CD14-positive monocyte (primary cell): ENCODE measurements at regions of chr2 and their contacts with region 1.

Region 1: DNA sequence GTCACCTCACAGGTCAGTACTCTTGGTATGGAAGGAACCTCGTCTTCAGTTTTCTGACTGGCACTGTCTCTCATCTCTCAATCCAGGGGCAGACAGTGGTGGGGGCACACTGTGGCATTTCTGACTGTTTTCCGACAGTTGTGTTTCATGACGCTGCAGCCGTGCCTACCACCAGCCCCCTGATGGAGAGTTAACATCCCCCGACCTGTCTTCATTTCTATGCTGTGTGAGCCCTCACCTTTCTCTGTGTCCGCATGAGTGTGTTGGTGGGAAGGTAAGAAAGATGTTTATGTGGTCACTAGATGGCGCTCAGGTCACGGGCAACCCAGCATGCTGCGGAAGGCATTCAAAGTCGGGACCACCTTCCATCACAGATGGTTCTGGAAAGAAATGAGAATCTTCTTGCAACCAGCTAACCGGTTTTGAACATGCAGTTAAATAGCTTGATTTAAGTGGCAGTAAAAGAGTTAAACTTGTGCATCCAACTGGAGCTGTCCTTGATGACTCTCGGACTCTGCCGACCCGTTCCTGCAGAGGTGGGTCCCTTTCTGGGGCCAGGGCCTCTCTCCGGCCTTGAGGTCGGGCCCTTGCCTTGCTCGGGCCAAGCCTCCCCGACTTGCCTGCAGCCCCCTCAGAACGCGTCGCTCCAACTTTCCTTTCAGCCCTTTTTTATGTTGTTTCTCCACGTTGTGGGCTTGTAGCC is 92.4 kb downstream of the DYSF start:
- DNase-seq: peak in 1 of 3 donors; percentile 12
- H3K4me3 ChIP-seq: no peak overlapping the region
- H3K4me3 Mint-ChIP-seq: peak overlapping the region; percentile 51 to 80
- H3K27ac ChIP-seq: peak overlapping the region in 1 of 2 donors; percentile 33
- H3K27ac Mint-ChIP-seq: peak overlapping the region in 5 of 7 donors; percentile 9 to 80 (median 36)
- H3K4me1 ChIP-seq: peaks cover 15 to 17% of the 10 kb centered on the region in 2 donors
- H3K4me1 Mint-ChIP-seq: peaks cover 18% of the 10 kb centered on the region
- H3K27me3 ChIP-seq: no peaks in the 10 kb centered on the region
- H3K27me3 Mint-ChIP-seq: peaks cover 1 to 5% (median 4%) of the 10 kb centered on the region in 3 donors
- CTCF ChIP-seq: peak; percentile 53

Region 2: DNA sequence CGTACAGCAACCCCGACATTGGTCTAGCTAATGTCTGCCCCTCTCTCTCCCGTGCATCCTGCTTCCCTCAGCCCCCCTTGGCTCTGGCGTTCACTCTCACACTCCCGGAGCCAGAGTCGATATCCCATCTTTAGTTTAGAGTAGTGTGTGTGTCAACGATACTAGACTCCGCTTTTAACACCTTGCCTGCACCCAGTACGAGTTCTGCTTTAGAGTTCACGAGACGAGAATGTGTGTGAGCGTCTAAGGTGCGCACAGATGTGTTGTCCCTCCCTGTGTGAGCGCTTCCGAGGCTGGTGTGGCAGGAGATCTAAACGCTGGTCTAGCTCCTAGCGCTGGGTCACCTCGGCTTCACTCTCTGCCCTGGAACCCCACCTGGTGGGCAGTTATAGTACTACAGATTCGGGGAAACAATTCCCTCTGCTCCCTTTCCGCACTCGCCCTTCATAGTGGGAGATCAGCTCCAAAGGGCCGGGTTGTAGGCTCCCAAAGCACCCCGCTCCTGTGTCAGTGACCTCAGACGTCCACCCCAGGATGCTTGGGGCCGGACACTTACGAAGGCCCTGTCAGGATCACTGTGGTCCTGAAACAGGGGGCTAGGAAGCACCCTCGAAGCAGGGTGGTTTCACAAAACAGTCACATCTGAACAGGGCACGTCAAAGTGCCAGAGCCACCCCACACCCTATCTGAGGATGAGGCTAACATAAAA is 604.6 kb after region 1 on chr2:
- intact Hi-C with region 1: loop called in 1 of 2 experiments (anchors 10 kb)
- DNase-seq: peak in 2 of 3 donors; percentile 14 to 27
- H3K4me3 ChIP-seq: no peak overlapping the region
- H3K4me3 Mint-ChIP-seq: peak overlapping the region; percentile 50 to 91
- H3K27ac ChIP-seq: no peak overlapping the region
- H3K27ac Mint-ChIP-seq: no peak overlapping the region
- H3K4me1 ChIP-seq: peaks cover 0 to 2% of the 10 kb centered on the region in 2 donors
- H3K4me1 Mint-ChIP-seq: peaks cover 30% of the 10 kb centered on the region
- H3K27me3 ChIP-seq: peaks cover 38 to 67% of the 10 kb centered on the region in 2 donors
- H3K27me3 Mint-ChIP-seq: peaks cover 68 to 77% (median 68%) of the 10 kb centered on the region in 3 donors
- CTCF ChIP-seq: peak; percentile 72

Region 3: GRCh38 chr2:72738096-72738495 is 1192.4 kb after region 1 on chr2:
- intact Hi-C with region 1: loop called in 1 of 2 experiments (anchors 10 kb)
- DNase-seq: no peak
- H3K4me3 ChIP-seq: no peak overlapping the region
- H3K4me3 Mint-ChIP-seq: no peak overlapping the region
- H3K27ac ChIP-seq: no peak overlapping the region
- H3K27ac Mint-ChIP-seq: no peak overlapping the region
- H3K4me1 ChIP-seq: no peaks in the 10 kb centered on the region
- H3K4me1 Mint-ChIP-seq: no peaks in the 10 kb centered on the region
- H3K27me3 ChIP-seq: no peaks in the 10 kb centered on the region
- H3K27me3 Mint-ChIP-seq: no peaks in the 10 kb centered on the region
- CTCF ChIP-seq: no peak